Activated CD4-positive, alpha-beta T cell treated with anti-CD3 and anti-CD28 coated beads for 36 hours (primary cell): ENCODE measurements at regions of chr15 and their contacts with region 1.

Region 1: DNA sequence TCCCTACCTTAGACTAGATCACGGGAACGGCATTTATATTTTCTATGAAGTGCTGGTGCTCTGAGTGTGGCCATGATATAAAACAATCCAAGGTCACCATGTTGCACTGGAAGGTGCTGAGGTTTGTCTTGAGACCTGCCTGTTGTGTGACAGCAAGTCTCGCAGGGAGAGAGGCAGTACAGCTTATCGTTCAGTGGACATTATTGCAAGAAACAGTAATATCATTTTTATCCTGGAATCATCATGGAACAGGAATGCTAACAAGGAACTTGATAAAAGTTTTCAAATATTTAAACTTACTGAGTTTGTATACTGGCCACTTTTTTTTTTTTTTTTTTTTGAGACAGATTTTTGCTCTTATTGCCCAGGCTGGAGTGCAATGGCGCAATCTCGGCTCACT is 40.0 kb upstream of the GCNT3 start:
- DNase-seq: no peak
- ATAC-seq: no peak
- H3K4me3 Mint-ChIP-seq: no peak overlapping the region
- H3K27ac Mint-ChIP-seq: no peak overlapping the region
- H3K4me1 Mint-ChIP-seq: no peaks in the 10 kb centered on the region
- H3K27me3 Mint-ChIP-seq: peaks cover 5% of the 10 kb centered on the region

Region 2: DNA sequence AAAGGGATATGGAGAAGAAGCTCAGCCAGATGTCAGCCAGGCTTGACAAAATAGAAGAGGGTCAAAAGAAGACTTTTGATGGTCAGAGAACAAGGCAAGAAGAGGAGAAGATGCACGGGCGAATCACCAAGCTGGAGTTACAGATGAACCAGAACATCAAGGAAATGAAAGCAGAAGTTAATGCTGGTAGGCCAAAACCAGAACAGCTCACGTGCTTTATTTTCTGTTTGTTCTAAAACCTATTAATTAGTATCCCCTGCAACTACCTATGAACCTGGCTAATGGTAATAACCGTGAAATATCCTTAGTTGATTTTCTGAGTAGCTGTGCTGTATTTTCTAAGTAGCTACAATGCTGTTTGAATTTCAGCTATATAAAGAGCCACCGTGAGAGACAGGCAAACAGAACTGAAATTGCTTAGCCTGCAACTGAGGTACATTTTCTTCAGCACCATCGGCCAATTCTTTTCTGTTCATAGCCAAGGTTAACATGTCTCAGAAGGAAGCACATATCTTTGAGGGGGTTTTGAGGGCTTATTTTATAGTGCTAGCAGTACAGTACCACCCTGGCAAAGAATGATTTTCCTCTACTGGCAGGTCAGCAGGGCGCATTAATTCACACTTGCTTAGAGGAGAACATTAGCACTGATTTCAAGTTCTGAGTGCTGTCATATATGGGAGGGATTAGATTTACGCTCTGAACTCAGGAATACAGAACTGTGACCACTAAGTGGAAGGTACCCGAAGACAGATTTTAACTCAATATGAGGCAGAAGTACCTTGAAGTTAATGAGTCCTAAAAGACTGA is 54.7 kb before region 1 on chr15:
- CTCF ChIA-PET with region 1: no interaction called
- POLR2A ChIA-PET with region 1: no interaction called
- intact Hi-C with region 1: loop called in 1 of 2 experiments (anchors 2 kb)
- DNase-seq: no peak
- ATAC-seq: no peak
- H3K4me3 Mint-ChIP-seq: no peak overlapping the region
- H3K27ac Mint-ChIP-seq: no peak overlapping the region
- H3K4me1 Mint-ChIP-seq: peaks cover 4% of the 10 kb centered on the region
- H3K27me3 Mint-ChIP-seq: no peaks in the 10 kb centered on the region